H1 (cell line): ENCODE measurements at regions of chr20 and their contacts with region 1.

Region 1: GRCh38 chr20:46022411-46023147 is 6.4 kb upstream of the SLC12A5 start:
- DNase-seq: peak in 1 of 2 experiments; percentile 92
- H3K4me3 ChIP-seq: peak overlapping the region; percentile 51 to 81 (median 71)
- H3K27ac ChIP-seq: no peak overlapping the region
- H3K4me1 ChIP-seq: no peaks in the 10 kb centered on the region; a peak in 1 of 7 replicates
- H3K27me3 ChIP-seq: peaks cover 2 to 45% (median 15%) of the 10 kb centered on the region in 4 experiments
- CTCF ChIP-seq: peak; percentile 75 to 78 (median 76)
- EP300 ChIP-seq: no peak
- POLR2A ChIP-seq: no peak
- RAD21 ChIP-seq: peak; percentile 75 to 82

Region 2: DNA sequence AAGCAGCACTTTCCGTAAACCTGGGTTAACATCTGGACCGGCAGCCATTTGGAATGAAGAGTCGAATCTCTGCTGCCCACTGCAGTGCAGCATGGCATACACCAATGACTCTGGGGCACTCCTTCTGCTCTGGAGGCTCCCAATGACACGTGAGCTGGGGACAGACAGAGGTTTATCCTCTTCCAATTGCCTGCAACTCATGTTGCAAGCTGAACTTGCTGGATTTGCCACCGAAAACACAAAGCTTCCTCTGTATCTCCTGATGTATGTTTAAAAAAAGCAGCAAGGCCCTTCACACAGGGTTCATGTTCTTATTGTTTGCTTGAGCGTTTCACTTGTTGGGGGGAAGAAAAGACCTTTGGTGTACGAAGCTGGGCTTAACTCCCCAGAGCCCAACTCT is 56.4 kb after region 1 on chr20:
- CTCF ChIA-PET with region 1: interaction called, 11 read pairs
- POLR2A ChIA-PET with region 1: no interaction called
- DNase-seq: no peak
- H3K4me3 ChIP-seq: no peak overlapping the region
- H3K27ac ChIP-seq: no peak overlapping the region
- H3K4me1 ChIP-seq: peaks cover 0 to 12% (median 4%) of the 10 kb centered on the region in 4 experiments; a peak in 5 of 7 replicates
- H3K27me3 ChIP-seq: no peaks in the 10 kb centered on the region
- CTCF ChIP-seq: no peak
- EP300 ChIP-seq: no peak
- POLR2A ChIP-seq: no peak
- RAD21 ChIP-seq: no peak

Region 3: DNA sequence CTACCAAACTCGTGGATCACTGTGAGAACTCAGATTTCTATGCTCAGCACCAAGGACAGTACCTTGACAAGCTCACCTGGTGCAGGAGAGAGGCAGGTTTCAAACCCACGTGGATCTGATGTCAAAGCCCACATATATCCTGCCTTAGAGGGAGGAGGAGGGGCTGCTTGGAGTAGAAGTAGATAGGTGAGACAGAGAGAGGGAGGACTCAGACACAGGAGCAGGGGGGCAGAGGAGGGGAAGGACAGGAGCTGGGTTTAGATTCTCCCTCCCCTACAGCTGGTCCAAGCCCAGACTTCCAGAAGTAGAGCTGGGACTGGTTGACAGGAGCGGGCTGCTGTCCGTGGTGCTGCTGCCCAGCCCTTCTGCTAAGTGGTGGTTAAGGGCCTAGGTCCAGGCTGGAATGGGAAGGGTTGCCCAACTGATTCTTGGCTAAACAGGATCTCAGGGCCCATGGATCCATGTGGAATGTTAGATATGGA is 208.3 kb after region 1 on chr20:
- CTCF ChIA-PET with region 1: interaction called, 10 read pairs
- POLR2A ChIA-PET with region 1: no interaction called
- DNase-seq: peak in 1 of 2 experiments; percentile 83
- H3K4me3 ChIP-seq: no peak overlapping the region
- H3K27ac ChIP-seq: no peak overlapping the region
- H3K4me1 ChIP-seq: peaks cover 2 to 5% (median 4%) of the 10 kb centered on the region in 4 experiments; a peak in 4 of 7 replicates
- H3K27me3 ChIP-seq: no peaks in the 10 kb centered on the region
- CTCF ChIP-seq: no peak
- EP300 ChIP-seq: no peak
- POLR2A ChIP-seq: no peak
- RAD21 ChIP-seq: 0 out of 4 replicates have a peak, but pooled peaks have one; percentile 3 to 13